RWPE1 (cell line): ENCODE measurements at regions of chr5 and their contacts with region 1.

Region 1: GRCh38 chr5:139765409-139766217 is 30.0 kb upstream of the PSD2 start:
- DNase-seq: peak; percentile 87
- H3K27ac ChIP-seq: no peak overlapping the region
- CTCF ChIP-seq: peak; percentile 100

Region 2: GRCh38 chr5:139646912-139647505 is 118.6 kb before region 1 on chr5:
- CTCF ChIA-PET with region 1: interaction called, 15 read pairs
- POLR2A ChIA-PET with region 1: no interaction called
- DNase-seq: no peak
- H3K27ac ChIP-seq: no peak overlapping the region
- CTCF ChIP-seq: no peak

Region 3: GRCh38 chr5:139660923-139661814 is 104.4 kb before region 1 on chr5:
- CTCF ChIA-PET with region 1: interaction called, 15 read pairs
- POLR2A ChIA-PET with region 1: interaction called, 3 read pairs
- DNase-seq: peak; percentile 96
- H3K27ac ChIP-seq: peak overlapping the region; percentile 94
- CTCF ChIP-seq: no peak

Region 4: DNA sequence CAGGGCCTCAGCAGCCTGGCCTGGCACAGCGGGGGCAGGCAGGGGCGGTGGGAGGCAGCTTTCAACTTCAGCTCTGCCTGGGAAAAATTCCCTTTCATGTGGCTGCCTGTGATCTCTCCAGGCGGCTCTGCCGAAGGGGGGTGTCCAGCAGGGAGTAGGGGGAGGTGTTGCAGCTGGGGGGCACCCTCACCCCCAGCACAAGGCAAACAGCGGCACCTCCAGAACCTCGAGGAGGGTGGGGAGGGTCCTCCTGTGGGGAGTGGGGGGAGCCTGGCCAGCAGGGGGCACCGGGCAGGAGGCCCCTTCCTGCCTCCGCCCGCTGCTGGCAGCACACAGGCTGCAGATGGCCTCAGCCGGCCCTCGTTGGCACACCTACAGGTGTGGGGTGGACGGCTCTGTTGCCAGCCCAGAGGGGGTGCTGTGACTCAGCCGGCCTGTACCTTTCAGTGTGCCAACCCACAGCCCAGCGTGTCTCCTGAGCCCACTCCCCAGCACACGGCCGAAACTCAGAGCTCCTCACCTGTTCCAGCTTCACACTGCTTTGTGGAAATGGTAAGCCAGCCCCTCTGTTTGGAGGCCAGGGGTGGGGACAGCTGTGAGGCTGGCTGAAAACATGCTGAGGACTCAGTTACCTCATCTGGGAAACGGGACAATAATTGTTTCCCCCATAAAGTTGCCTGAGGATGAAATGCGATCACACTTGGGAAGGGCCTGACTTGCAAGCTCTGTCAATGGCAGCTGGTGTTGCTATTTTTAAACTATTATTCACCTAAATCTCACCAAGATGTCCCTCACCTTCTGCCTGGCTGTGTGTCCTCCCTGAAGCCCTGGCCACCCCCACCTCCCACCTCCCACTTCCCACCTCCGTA is 80.5 kb before region 1 on chr5:
- CTCF ChIA-PET with region 1: interaction called, 31 read pairs
- POLR2A ChIA-PET with region 1: no interaction called
- DNase-seq: no peak
- H3K27ac ChIP-seq: no peak overlapping the region
- CTCF ChIP-seq: no peak

Region 5: GRCh38 chr5:139711067-139711905 is 54.3 kb before region 1 on chr5:
- CTCF ChIA-PET with region 1: interaction called, 22 read pairs
- POLR2A ChIA-PET with region 1: no interaction called
- DNase-seq: peak; percentile 61
- H3K27ac ChIP-seq: no peak overlapping the region
- CTCF ChIP-seq: no peak; the same call in 1 of the 2 replicates

Region 6: GRCh38 chr5:139745800-139746690 is 19.6 kb before region 1 on chr5:
- CTCF ChIA-PET with region 1: interaction called, 40 read pairs
- POLR2A ChIA-PET with region 1: no interaction called
- DNase-seq: peak; percentile 97
- H3K27ac ChIP-seq: no peak overlapping the region
- CTCF ChIP-seq: no peak

Region 7: DNA sequence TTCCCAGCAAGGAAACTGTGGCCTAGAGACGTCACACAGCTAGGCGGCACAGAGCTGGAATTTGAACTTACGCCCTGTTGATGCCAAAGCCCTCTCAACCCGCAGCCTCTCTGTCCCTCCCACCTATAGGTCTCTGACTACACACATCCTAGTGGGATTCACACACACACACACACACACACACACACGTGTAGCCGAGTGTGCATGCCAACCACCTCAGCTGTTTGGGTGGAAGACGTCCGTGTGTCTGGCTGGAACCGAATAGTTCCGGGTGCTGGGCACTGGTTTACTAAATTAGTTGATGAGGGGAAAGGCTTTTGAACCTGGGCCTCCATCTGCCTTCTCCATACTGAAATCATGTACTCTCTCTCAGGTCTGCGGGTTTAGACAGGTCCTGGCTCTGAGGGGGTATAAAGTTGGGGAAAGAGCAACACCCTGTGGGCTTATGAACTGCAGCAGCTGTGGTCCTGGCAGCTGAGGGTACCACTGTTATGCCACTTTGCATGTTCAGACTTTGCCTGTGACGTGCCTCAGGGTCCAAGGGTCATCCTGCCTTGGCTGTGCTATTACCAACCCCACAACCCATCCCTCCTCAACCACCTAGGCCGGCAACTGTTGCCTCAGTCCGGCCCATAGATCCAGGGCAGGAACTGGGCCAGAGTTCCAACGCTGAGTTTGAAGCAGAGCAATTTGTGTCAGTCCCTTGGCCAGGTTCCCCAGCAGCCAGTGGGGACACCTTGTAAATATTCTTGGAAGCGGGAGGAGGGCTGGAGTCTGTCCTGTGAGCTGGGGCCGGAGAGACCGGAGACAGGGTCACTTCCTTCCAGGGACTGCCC is 80.5 kb after region 1 on chr5:
- CTCF ChIA-PET with region 1: no interaction called
- POLR2A ChIA-PET with region 1: no interaction called
- DNase-seq: no peak
- H3K27ac ChIP-seq: peak overlapping the region; percentile 31
- CTCF ChIP-seq: 0 out of 2 replicates have a peak, but pooled peaks have one; percentile 14